ENCODE measurements at regions of chr4 and their contacts with region 1.

Region 1: GRCh38 chr4:102430461-102430910 is 70.7 kb upstream of the NFKB1 start:
- DNase-seq: no peak
- ATAC-seq: peak; percentile 38
- H3K4me3 ChIP-seq: peak overlapping the region; percentile 83
- H3K27ac ChIP-seq: peak overlapping the region; percentile 61
- H3K4me1 ChIP-seq: no peaks in the 10 kb centered on the region
- H3K27me3 ChIP-seq: no peaks in the 10 kb centered on the region
- CTCF ChIP-seq: no peak
- EP300 ChIP-seq: no peak
- POLR2A ChIP-seq: no peak
- RAD21 ChIP-seq: no peak

Region 2: GRCh38 chr4:102255454-102255853 is 175.0 kb before region 1 on chr4:
- CTCF ChIA-PET with region 1: interaction called, 39 read pairs
- POLR2A ChIA-PET with region 1: interaction called, 10 read pairs
- RAD21 ChIA-PET with region 1: interaction called, 20 read pairs
- SMC1A ChIA-PET with region 1: interaction called, 17 read pairs
- in situ Hi-C with region 1: no loop called
- intact Hi-C with region 1: loop called (anchors 1 kb)
- DNase-seq: no peak
- ATAC-seq: no peak
- H3K4me3 ChIP-seq: no peak overlapping the region
- H3K27ac ChIP-seq: no peak overlapping the region
- H3K4me1 ChIP-seq: no peaks in the 10 kb centered on the region
- H3K27me3 ChIP-seq: no peaks in the 10 kb centered on the region
- CTCF ChIP-seq: no peak
- EP300 ChIP-seq: no peak
- POLR2A ChIP-seq: no peak
- RAD21 ChIP-seq: no peak

Region 3: DNA sequence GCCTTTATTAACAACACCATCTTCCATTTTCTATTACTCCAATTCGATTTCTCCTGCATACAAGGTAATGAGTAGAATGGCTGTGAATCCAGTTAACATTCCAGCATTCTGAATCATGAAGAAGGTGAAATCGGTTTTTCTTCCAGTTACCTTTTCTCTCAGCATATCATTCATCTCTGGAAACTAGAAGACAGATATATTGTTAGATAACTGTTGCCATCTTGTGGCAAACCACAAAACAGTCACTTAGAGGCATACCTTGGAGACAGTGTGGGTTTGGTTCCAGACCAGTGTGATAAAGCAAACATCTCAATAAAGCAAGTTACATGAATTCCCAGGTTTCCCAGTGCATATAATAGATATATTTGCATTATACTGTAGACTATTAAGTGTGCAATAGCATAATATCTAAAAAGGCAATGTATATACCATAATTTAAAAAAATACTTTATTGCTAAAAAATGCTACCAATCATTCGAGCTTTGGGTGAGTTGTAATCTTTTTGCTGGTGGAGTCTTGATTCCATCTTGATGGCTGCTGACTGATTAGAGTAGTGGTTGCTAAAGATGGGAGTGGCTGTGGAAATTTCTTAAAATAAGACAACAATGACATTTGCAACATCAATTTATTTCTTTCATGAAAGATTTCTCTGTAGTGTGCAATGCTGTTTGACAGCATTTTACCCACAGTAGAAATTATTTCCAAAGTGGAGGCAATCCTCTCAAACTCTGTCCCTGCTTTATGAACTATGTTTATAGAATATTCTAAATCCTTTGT is 167.3 kb before region 1 on chr4:
- CTCF ChIA-PET with region 1: interaction called, 39 read pairs
- POLR2A ChIA-PET with region 1: interaction called, 10 read pairs
- RAD21 ChIA-PET with region 1: interaction called, 20 read pairs
- SMC1A ChIA-PET with region 1: interaction called, 17 read pairs
- in situ Hi-C with region 1: no loop called
- intact Hi-C with region 1: no loop called
- DNase-seq: no peak
- ATAC-seq: peak; percentile 94
- H3K4me3 ChIP-seq: no peak overlapping the region
- H3K27ac ChIP-seq: no peak overlapping the region
- H3K4me1 ChIP-seq: no peaks in the 10 kb centered on the region
- H3K27me3 ChIP-seq: no peaks in the 10 kb centered on the region
- CTCF ChIP-seq: peak; percentile 32 to 55 (median 40); a peak in 5 of 6 replicates
- EP300 ChIP-seq: no peak
- POLR2A ChIP-seq: no peak
- RAD21 ChIP-seq: peak; percentile 61

Region 4: DNA sequence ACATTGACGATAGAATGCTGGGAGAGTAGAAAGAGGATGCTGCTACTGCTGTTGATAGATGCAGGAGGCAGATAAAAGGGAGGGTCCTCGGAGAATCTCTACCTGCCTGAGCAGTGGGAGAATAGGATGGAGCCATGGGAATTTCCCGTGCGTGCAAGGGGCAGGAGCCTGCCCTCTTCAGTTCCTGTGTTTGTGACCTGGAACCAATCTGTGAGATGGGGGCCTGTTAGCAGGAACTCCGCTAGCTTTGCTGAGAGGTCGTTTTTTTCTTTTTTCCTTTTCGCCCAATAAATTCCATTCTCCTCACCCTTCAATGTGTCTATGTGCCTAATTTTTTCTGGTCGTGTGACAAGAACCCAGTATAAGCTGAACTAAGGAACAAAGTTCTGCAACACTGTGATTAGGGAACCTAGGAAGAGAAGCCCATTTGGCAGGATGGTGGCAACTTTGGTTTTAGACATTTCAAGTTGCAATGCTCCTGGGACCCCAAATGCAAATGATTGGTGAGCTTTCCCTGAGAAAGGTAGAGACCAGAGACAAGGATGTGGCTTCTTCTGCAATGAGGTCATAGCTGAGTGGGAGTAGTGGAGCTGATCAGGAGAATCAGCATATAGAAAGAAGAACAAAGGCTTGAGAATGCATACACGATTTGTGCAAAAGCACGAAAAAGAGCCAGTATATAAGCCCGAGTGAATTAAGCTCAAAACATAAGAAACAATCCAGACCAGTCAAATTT is 109.1 kb before region 1 on chr4:
- CTCF ChIA-PET with region 1: no interaction called
- POLR2A ChIA-PET with region 1: no interaction called
- RAD21 ChIA-PET with region 1: interaction called, 11 read pairs
- SMC1A ChIA-PET with region 1: interaction called, 4 read pairs
- in situ Hi-C with region 1: no loop called
- intact Hi-C with region 1: no loop called
- DNase-seq: peak; percentile 63
- ATAC-seq: peak; percentile 87
- H3K4me3 ChIP-seq: peak overlapping the region; percentile 23; the same call in 1 of the 2 replicates
- H3K27ac ChIP-seq: peak overlapping the region; percentile 62
- H3K4me1 ChIP-seq: peaks cover 6% of the 10 kb centered on the region
- H3K27me3 ChIP-seq: no peaks in the 10 kb centered on the region
- CTCF ChIP-seq: no peak
- EP300 ChIP-seq: peak in 1 of 2 experiments; percentile 52; a peak in 1 of 4 replicates
- POLR2A ChIP-seq: no peak
- RAD21 ChIP-seq: no peak